Cardiac septum (tissue), 1 donor: ENCODE measurements at regions of chr9 and their contacts with region 1.

Region 1: DNA sequence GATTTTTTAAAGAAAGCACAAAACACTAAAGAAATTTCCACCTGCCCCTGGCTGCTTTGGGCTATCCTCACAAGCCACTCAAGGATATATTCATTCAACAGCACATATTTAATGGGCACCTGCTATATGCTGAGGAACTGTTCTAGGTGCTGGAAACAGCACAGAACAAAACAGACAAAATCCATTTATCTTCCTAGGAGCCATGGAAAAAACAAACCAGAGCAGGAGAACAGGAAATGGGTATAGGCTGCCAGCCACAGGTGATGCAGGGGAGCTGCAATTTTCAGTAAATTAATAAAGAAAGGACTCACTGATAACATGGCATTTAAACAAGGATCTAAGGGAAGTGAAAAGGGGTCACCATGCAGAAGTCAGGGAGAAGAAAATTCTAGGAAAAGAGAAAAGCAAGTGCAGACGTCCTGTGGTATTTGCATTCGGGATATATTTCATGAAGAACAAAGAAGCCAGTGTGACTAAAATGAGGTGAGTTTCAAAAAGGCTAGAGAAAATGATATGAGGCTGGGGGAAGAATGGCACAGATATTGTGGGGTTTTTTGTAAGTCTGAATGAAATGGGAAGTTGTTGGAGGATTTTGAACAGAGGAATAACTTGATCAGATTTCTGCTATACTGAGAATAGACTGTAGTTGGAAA is 152.2 kb downstream of the ADAMTSL1 start:
- DNase-seq: no peak

Region 2: DNA sequence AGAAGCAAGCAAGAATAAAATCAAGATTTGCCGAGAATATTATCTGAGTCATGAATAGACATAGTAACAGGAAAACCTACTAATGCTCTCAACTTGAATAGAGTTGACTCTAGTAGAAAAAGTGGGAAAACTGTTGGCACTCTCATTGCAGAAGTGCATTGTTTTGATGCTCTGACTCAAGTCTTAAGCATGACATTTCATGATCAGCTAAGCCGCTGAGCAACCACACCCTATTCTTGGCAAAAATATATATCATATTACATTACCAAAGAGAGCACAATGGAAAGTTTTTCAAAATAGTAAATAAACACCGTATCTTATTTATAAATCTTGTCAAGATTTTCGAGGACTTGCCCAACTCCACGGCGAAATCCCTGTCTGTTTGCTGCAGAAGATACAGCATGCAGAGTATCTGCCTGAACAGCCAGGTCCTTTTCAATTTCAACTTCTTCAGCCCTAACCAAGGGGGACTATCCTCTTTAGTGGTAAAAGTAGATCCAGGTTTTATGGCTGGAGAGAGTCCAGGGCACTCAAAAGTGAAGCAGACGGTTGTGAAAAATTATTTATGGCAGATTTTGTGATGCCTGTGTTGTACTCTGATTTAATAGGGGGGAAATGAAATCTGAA is 166.1 kb before region 1 on chr9:
- intact Hi-C with region 1: loop called (anchors 10 kb)
- DNase-seq: no peak

Region 3: DNA sequence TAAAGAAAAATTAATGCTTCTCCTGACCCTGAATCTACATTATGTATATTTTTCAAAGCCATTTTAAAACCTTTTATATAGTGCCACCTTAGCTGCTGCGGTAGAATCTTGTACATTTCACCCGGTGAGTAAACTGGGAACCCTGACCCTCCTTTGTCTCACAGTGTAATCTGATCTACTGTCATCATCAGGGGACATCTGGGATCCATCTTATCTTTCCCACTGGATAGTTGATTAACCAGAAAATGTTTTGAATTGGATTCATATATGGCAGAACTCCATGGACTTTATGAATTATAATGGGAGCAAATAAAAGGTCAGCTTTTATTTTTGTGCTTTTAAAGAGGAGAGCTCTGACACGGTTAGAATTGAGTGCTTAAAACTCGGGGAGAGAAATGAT is 57.2 kb before region 1 on chr9:
- intact Hi-C with region 1: no loop called
- DNase-seq: no peak